ENCODE measurements at regions of chr18 and their contacts with region 1.

Region 1: GRCh38 chr18:13629841-13630715 is 96.3 kb downstream of the FAM210A start:
- DNase-seq: peak; percentile 63
- H3K4me3 Mint-ChIP-seq: no peak overlapping the region
- H3K27ac Mint-ChIP-seq: no peak overlapping the region
- H3K4me1 Mint-ChIP-seq: no peaks in the 10 kb centered on the region
- H3K27me3 Mint-ChIP-seq: peaks cover 15% of the 10 kb centered on the region
- CTCF ChIP-seq: peak; percentile 64

Region 2: DNA sequence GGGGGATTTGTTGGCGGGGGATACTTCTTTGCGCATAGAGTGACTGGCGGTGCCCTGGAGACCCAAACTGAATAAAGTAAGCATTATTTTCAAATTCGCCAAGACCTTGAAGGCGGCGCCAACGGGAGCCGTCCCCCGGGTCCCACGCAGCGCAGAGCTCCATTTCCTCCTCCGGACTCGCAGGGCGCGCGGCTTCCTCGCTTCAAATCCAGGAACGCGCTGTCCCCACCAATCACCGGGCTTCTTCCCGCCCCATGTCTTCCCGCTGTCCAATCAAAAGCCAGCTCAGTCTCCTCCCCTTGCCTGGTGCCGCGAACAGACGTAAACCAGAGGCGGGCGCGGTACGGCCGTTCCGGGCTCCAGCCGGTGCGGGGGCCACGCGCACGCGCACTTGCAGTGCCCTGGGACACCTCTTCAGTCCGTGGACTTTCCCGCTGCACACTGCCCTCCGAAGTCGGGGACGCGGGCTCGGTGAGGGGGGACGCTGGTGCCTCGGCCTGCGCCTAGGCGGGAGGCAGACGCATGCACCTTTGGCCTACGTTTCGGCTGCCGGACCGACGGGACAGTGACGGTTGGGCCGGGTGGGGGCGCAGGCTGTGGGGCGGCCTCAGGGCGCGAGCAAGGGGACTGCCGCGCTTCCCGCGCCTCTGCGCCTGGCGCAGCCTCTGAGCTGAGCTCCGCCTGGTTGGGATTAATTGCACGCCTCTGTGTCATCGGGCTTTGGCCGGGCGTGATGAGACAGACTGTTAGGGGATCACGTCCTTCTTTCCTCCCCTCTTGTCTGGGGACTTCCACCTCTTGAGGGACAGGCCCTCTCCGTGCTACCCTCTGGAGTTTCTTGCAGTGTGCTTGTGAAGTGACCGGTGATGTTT is 638.9 kb before region 1 on chr18 and contains the start of gene CEP192:
- CTCF ChIA-PET with region 1: no interaction called
- POLR2A ChIA-PET with region 1: no interaction called
- intact Hi-C with region 1: loop called (anchors 5 kb)
- DNase-seq: peak; percentile 98
- H3K4me3 Mint-ChIP-seq: peak within 1 kb of the TSS; percentile 99
- H3K27ac Mint-ChIP-seq: peak within 1 kb of the TSS; percentile 83
- H3K4me1 Mint-ChIP-seq: peaks cover 21% of the 10 kb centered on the region
- H3K27me3 Mint-ChIP-seq: no peaks in the 10 kb centered on the region
- CTCF ChIP-seq: no peak
- total RNA-seq, gene CEP192: 14.3 and 15.2 TPM in 2 replicates

Region 3: GRCh38 chr18:13159579-13159978 is 470.5 kb before region 1 on chr18:
- CTCF ChIA-PET with region 1: no interaction called
- POLR2A ChIA-PET with region 1: no interaction called
- intact Hi-C with region 1: loop called (anchors 10 kb)
- DNase-seq: peak; percentile 69
- H3K4me3 Mint-ChIP-seq: no peak overlapping the region
- H3K27ac Mint-ChIP-seq: no peak overlapping the region
- H3K4me1 Mint-ChIP-seq: no peaks in the 10 kb centered on the region
- H3K27me3 Mint-ChIP-seq: peaks cover 12% of the 10 kb centered on the region
- CTCF ChIP-seq: peak; percentile 78

Region 4: GRCh38 chr18:13558124-13558523 is 72.0 kb before region 1 on chr18:
- CTCF ChIA-PET with region 1: interaction called, 13 read pairs
- POLR2A ChIA-PET with region 1: no interaction called
- intact Hi-C with region 1: loop called (anchors 1 kb)
- DNase-seq: peak; percentile 48
- H3K4me3 Mint-ChIP-seq: no peak overlapping the region
- H3K27ac Mint-ChIP-seq: no peak overlapping the region
- H3K4me1 Mint-ChIP-seq: no peaks in the 10 kb centered on the region
- H3K27me3 Mint-ChIP-seq: peaks cover 30% of the 10 kb centered on the region
- CTCF ChIP-seq: peak; percentile 51